Psoas muscle (tissue), 8 donors: ENCODE measurements at regions of chr3 and their contacts with region 1.

Region 1: DNA sequence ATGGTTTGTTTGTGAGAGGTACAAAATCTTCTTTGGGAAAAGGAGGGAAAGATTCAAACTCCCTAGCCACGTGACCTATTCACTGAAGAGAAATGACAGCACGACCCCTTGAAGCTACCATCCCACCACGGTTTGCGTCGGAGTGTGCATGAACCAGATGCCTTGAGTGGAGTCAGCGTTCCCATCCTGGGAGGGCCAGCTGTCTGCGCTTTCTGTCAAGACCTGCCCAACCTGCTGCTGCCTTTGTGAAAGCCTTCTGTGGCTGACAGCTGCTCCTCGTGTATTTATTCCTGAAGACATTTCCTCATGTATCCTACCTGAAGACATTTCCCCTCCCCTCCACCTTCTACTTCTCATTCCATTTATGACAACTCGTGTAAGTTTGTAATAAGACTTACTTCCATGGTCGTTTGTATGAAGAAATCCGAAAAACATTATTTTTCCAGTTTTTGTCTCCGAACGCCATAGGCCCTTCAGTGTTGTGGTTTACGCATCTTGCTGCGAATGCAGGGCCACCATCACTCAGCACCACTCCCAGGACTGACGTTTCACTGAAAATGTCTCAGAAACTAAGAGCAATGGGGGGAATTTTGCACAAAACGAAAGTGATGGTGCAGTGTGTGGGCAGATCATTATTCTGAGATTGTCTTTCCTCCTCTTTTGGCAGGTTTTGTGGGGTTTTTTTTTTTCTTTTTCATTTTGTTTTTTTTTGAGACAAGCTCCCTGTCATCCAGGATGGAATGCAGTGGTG is 18.9 kb downstream of the EBLN2 start:
- DNase-seq: no peak
- ATAC-seq: no peak
- H3K4me3 ChIP-seq: no peak overlapping the region
- H3K27ac ChIP-seq: no peak overlapping the region
- H3K4me1 ChIP-seq: no peaks in the 10 kb centered on the region
- H3K27me3 ChIP-seq: no peaks in the 10 kb centered on the region
- CTCF ChIP-seq: no peak

Region 2: DNA sequence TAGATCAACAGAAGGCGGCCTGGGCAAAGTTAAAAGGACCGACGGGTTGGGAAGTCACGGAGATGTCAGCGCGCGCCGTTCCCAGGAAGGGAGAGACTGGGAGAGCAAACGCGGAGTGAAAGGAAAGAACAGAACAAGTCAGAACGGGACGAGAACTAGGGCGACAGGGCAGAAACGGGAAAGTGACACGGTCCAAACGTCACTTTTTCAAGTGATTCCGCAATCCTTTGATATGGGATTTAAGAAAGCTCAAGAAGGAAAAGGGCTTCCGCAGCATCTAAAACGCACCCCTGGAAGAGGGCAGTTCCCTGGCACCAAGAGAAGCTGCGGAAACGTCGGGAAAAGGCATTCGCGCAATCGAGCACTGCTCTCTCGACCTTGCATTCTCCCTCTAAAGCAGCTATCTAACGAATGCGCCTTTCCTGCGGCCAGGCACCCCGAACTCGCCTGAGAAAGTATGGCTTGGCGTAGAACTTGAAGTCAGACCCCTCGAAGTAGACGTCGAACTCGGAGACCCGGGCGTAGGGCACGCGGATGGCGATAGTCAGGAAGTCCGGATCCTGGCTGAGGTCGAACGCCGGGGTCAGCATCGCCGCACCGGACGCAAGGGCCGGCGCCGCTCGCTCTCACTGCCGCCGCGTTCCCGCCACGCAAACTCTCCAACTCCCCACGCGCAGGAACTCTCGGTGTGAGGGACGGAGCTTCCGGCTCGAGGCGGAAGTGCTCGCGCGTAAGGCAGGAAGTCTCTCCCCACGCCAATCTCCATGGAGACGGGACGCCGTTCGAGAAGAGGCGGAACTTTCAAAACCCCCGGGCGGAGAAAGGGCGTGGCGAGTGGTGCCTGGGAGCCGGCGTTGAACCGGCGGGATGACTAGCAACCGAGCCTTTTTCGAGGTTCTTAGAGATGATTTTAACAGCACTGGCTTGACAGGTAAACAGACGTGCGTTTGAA is 232.4 kb before region 1 on chr3 and contains the start of gene SHQ1:
- intact Hi-C with region 1: loop called (anchors 5 kb)
- DNase-seq: peak; percentile 96 to 98
- ATAC-seq: peak; percentile 98 to 99 (median 99)
- H3K4me3 ChIP-seq: peak within 1 kb of the TSS; percentile 89
- H3K27ac ChIP-seq: peak within 1 kb of the TSS; percentile 84
- H3K4me1 ChIP-seq: peaks cover 31% of the 10 kb centered on the region
- H3K27me3 ChIP-seq: no peaks in the 10 kb centered on the region
- CTCF ChIP-seq: no peak
- total RNA-seq, gene SHQ1: 6.2 to 20.6 (median 18.3) TPM